Astrocyte of the cerebellum (primary cell): ENCODE measurements at regions of chr14 and their contacts with region 1.

Region 1: DNA sequence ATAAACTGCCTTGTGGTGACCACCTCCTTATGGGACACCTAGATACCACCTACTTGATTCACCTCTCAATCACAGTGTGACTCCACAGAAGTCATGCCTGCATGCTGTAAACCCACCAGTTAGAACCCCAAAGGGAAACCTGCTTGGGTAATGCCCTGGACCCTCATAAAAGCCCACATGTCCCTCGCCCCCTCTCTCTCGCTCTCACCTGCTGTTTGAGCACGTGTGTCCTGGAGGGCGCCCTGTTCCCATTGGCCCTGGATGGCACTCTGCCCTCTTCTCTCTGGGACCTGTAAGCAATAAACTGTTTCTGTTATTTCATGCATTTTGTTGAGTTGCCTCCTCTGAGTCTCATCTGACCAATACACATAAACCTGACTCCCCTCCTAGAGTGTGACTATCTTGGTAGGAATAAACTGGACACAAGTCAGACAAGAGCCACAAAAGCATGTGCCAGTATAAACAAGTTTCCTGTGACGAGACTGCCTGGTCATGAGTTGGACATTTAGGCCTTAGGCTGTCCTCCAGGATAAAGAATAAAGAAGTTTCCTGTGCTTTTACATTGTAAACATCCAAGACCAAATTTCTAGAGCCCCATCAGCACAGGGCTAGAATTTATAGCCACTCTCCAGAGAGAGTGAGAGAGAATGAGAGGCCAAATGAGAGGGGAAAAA is 8.6 kb downstream of the IFI27L2 start:
- DNase-seq: peak; percentile 65
- H3K4me3 ChIP-seq: no peak overlapping the region
- CTCF ChIP-seq: no peak

Region 2: GRCh38 chr14:94026173-94026888 is 94.5 kb before region 1 on chr14 and contains the start of gene OTUB2:
- in situ Hi-C with region 1: loop called (anchors 5 kb)
- DNase-seq: peak; percentile 96
- H3K4me3 ChIP-seq: peak within 1 kb of the TSS; percentile 58
- CTCF ChIP-seq: no peak

Region 3: GRCh38 chr14:94175011-94175745 is 54.4 kb after region 1 on chr14:
- in situ Hi-C with region 1: loop called (anchors 5 kb)
- DNase-seq: no peak
- H3K4me3 ChIP-seq: peak overlapping the region; percentile 60
- CTCF ChIP-seq: no peak